Colonic mucosa (tissue), 4 donors: ENCODE measurements at regions of chr6 and their contacts with region 1.

Region 1: GRCh38 chr6:39892490-39893129 is 41.7 kb downstream of the MOCS1 start:
- DNase-seq: peak; percentile 55
- H3K4me3 ChIP-seq: no peak overlapping the region
- H3K27ac ChIP-seq: no peak overlapping the region
- H3K4me1 ChIP-seq: no peaks in the 10 kb centered on the region
- H3K27me3 ChIP-seq: no peaks in the 10 kb centered on the region
- CTCF ChIP-seq: peak; percentile 50

Region 2: DNA sequence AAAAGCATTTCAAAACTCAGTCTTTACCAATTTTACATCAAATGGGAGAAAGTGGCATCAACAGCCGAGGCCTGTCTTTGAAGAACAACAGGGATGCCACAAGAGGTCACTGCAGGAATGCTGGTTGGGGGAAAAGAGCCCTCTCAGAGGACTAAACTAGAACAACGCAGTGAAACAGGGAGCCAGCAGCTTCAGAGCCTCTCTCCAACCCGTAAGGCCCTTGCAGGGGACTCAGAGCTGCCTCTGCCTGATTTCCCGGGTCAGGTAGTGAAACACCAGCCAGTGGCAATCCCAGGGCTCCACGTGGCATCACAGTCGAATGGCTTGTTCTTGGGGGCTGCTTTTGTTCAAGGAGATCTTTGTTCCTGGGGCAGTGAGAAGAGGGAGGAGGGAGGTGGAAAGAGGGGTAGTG is 515.1 kb before region 1 on chr6:
- intact Hi-C with region 1: loop called (anchors 5 kb)
- DNase-seq: peak; percentile 49
- H3K4me3 ChIP-seq: no peak overlapping the region
- H3K27ac ChIP-seq: no peak overlapping the region
- H3K4me1 ChIP-seq: no peaks in the 10 kb centered on the region
- H3K27me3 ChIP-seq: no peaks in the 10 kb centered on the region
- CTCF ChIP-seq: peak; percentile 52

Region 3: DNA sequence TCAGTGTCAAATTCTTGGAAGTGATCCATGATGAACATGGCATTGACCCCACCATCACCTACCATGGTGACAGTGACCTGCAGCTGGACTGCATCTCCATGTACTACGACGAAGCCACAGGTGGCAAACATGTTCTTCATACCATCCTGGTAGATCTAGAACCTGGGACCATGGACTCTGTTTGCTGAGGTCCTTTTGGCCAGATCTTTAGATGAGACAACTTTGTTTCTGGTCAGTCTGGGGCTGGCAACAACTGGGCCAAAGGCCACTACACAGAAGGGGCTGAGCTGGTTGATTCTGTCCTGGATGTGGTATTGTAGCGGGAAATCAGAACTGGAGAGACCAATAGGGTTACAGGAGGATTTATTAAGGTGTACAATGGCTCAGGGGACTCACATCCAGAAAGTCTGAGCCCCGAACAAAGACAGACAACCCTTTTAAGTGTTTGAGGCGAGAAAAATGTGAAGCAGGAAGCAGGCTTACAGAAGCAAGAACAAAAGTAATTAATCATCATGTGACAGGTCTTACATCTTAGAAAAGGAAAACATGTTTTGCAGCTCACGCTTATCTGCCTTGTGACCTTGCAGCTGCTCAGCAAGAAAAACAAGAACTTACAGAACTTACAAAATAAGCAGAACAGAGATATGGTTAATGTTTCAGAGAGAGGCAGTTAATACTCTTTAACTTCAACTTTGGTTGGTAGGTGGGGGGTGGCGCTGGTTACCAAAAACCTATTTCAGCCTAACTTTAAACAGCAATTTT is 100.4 kb after region 1 on chr6:
- intact Hi-C with region 1: no loop called
- DNase-seq: no peak
- H3K4me3 ChIP-seq: no peak overlapping the region
- H3K27ac ChIP-seq: no peak overlapping the region
- H3K4me1 ChIP-seq: no peaks in the 10 kb centered on the region
- H3K27me3 ChIP-seq: no peaks in the 10 kb centered on the region
- CTCF ChIP-seq: no peak